Ascending aorta (tissue), 2 donors: ENCODE measurements at regions of chr6 and their contacts with region 1.

Region 1: GRCh38 chr6:42782622-42783176 is 847 bp downstream of the BICRAL start:
- DNase-seq: peak; percentile 35 to 90
- H3K4me3 ChIP-seq: peak overlapping the region; percentile 97 to 99
- H3K27ac ChIP-seq: peak overlapping the region; percentile 99 to 100
- H3K4me1 ChIP-seq: peaks cover 4 to 29% of the 10 kb centered on the region in 2 donors
- H3K27me3 ChIP-seq: no peaks in the 10 kb centered on the region
- CTCF ChIP-seq: peak in 1 of 3 experiments; percentile 2

Region 2: GRCh38 chr6:42692137-42692911 is 90.4 kb before region 1 on chr6:
- intact Hi-C with region 1: no loop called
- DNase-seq: no peak
- H3K4me3 ChIP-seq: no peak overlapping the region
- H3K27ac ChIP-seq: peak overlapping the region; percentile 65 to 74
- H3K4me1 ChIP-seq: peaks cover 10 to 38% of the 10 kb centered on the region in 2 donors
- H3K27me3 ChIP-seq: no peaks in the 10 kb centered on the region
- CTCF ChIP-seq: no peak

Region 3: GRCh38 chr6:42819803-42820511 is 37.3 kb after region 1 on chr6:
- intact Hi-C with region 1: loop called (anchors 5 kb)
- DNase-seq: no peak
- H3K4me3 ChIP-seq: no peak overlapping the region
- H3K27ac ChIP-seq: peak overlapping the region; percentile 77 to 83
- H3K4me1 ChIP-seq: peaks cover 0 to 15% of the 10 kb centered on the region in 2 donors
- H3K27me3 ChIP-seq: no peaks in the 10 kb centered on the region
- CTCF ChIP-seq: peak in 1 of 3 experiments; percentile 24

Region 4: DNA sequence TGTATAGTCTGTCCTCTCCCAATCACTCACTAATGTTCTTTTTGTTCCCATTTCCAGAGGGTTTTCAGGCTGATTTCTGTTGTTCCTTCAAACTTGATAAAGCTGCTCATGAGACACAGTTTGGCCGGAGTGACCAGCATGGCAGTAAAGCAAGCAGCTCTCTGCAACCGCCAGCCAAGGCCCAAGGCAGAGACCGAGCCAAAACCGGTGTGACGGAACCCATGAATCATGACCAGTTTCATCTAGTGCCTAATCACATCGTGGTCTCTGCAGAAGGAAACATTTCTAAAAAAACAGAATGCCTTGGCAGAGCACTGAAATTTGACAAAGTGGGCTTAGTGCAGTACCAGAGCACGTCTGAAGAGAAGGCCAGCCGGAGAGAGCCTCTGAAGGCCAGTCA is 81.9 kb after region 1 on chr6:
- intact Hi-C with region 1: no loop called
- DNase-seq: peak; percentile 36 to 83
- H3K4me3 ChIP-seq: no peak overlapping the region
- H3K27ac ChIP-seq: peak overlapping the region; percentile 76 to 83
- H3K4me1 ChIP-seq: peaks cover 4 to 14% of the 10 kb centered on the region in 2 donors
- H3K27me3 ChIP-seq: no peaks in the 10 kb centered on the region
- CTCF ChIP-seq: no peak

Region 5: DNA sequence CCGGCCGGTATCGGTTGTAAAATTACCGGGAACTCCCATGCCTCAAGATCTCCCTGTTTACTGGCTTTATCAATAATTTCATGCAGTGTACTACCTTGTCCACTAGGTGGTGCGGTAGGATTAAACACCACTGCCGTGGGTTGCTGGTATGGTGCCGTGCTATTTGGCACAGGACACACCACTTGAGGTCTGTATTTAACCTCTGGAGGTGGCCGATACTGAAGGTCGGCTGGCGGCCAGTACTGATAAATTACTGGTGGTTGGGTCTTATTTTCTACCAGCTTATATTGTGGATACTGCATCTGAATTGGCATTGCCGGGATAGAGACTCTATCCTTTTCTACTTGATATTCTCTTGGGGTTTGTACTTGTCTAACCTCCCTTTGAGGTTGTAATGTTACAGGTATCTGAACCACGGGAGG is 118.8 kb after region 1 on chr6:
- intact Hi-C with region 1: no loop called
- DNase-seq: peak in 1 of 2 donors; percentile 87
- H3K4me3 ChIP-seq: no peak overlapping the region
- H3K27ac ChIP-seq: no peak overlapping the region
- H3K4me1 ChIP-seq: peaks cover 0 to 18% of the 10 kb centered on the region in 2 donors
- H3K27me3 ChIP-seq: no peaks in the 10 kb centered on the region
- CTCF ChIP-seq: peak; percentile 83 to 92 (median 88)